PC-9 (cell line): ENCODE measurements at regions of chr9 and their contacts with region 1.

Region 1: GRCh38 chr9:116812231-116813030 is 125.3 kb downstream of the TRIM32 start:
- DNase-seq: no peak
- H3K4me3 ChIP-seq: no peak overlapping the region
- H3K27ac ChIP-seq: no peak overlapping the region
- H3K4me1 ChIP-seq: 0 out of 2 replicates have a peak, but pooled peaks cover 5% of the 10 kb centered on the region
- H3K27me3 ChIP-seq: no peaks in the 10 kb centered on the region
- CTCF ChIP-seq: no peak

Region 2: DNA sequence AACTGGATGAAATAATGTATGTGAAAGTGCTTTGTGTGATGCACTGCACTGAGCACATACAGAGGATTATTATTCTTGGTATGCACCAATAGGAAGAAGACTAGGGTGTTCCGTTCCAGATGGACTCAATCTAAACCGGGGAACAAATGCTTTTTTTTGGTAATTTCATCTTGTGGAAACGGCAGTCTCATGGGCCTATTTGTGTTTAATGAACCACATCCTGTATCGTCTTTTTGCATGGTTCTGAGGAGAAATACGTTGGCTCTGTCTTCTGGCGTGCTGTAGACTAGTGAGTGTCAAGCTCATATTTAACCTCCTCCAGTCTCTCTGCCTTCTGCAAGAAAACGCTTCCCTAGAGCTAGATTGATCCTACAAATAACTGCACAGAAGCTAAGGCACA is 95.3 kb before region 1 on chr9:
- CTCF ChIA-PET with region 1: no interaction called
- POLR2A ChIA-PET with region 1: no interaction called
- intact Hi-C with region 1: no loop called
- DNase-seq: no peak
- H3K4me3 ChIP-seq: no peak overlapping the region
- H3K27ac ChIP-seq: no peak overlapping the region
- H3K4me1 ChIP-seq: no peaks in the 10 kb centered on the region
- H3K27me3 ChIP-seq: no peaks in the 10 kb centered on the region
- CTCF ChIP-seq: no peak

Region 3: DNA sequence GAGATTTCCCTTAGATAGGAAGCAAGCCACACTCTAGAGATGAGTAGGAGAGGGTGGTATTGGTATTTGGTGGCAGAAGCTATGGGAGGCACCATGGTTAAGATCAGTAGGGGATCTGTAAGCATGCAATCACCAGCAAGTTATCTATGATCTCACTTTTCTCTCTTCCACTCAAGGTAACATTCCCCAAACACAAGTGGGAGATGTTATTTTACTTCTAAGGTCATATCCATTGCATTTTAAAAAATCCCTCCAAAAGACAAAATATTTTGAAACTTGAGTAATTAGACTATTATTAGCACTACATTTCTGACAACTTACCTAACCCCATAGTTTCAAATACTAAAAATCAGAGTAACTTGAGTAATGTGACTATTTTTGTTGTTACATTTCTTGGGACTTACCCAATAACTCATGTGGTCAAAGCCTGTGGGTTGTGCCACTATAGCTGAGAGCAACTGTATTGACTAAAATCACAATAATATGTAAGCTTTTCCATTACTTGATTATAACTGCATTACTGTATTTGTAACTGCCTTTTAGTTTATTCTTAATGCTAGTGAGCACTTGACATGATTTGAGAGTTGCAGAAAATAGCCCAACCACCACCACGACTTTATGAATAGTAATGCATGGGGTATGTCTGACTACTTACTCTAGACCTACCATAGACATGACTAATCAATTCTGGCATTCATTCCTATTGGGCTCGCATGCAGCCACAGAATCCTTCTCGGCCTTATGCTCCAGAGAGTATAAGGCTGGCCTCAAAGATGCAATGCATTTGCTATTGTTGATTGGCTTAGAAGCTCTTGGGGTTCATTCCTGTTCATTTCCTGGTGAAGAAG is 139.4 kb after region 1 on chr9:
- CTCF ChIA-PET with region 1: no interaction called
- POLR2A ChIA-PET with region 1: interaction called, 17 read pairs
- intact Hi-C with region 1: no loop called
- DNase-seq: peak in 1 of 2 experiments; percentile 42
- H3K4me3 ChIP-seq: no peak overlapping the region
- H3K27ac ChIP-seq: no peak overlapping the region
- H3K4me1 ChIP-seq: no peaks in the 10 kb centered on the region; the same call in 1 of the 2 replicates
- H3K27me3 ChIP-seq: no peaks in the 10 kb centered on the region
- CTCF ChIP-seq: no peak